ENCODE measurements at regions of chrX and their contacts with region 1.

Region 1: GRCh38 chrX:24054182-24055042 is at the start of gene EIF2S3:
- DNase-seq: peak; percentile 76 to 91
- ATAC-seq: peak; percentile 82 to 94 (median 82)
- H3K4me3 ChIP-seq: peak within 1 kb of the TSS; percentile 62
- H3K4me3 Mint-ChIP-seq: no peak within 1 kb of the TSS
- H3K27ac ChIP-seq: peak within 1 kb of the TSS; percentile 93
- H3K27ac Mint-ChIP-seq: no peak within 1 kb of the TSS
- H3K4me1 ChIP-seq: peaks cover 6% of the 10 kb centered on the region
- H3K4me1 Mint-ChIP-seq: no peaks in the 10 kb centered on the region
- H3K27me3 ChIP-seq: no peaks in the 10 kb centered on the region
- H3K27me3 Mint-ChIP-seq: no peaks in the 10 kb centered on the region
- CTCF ChIP-seq: peak; percentile 48
- total RNA-seq, gene EIF2S3: 124 to 199 (median 132) TPM

Region 2: DNA sequence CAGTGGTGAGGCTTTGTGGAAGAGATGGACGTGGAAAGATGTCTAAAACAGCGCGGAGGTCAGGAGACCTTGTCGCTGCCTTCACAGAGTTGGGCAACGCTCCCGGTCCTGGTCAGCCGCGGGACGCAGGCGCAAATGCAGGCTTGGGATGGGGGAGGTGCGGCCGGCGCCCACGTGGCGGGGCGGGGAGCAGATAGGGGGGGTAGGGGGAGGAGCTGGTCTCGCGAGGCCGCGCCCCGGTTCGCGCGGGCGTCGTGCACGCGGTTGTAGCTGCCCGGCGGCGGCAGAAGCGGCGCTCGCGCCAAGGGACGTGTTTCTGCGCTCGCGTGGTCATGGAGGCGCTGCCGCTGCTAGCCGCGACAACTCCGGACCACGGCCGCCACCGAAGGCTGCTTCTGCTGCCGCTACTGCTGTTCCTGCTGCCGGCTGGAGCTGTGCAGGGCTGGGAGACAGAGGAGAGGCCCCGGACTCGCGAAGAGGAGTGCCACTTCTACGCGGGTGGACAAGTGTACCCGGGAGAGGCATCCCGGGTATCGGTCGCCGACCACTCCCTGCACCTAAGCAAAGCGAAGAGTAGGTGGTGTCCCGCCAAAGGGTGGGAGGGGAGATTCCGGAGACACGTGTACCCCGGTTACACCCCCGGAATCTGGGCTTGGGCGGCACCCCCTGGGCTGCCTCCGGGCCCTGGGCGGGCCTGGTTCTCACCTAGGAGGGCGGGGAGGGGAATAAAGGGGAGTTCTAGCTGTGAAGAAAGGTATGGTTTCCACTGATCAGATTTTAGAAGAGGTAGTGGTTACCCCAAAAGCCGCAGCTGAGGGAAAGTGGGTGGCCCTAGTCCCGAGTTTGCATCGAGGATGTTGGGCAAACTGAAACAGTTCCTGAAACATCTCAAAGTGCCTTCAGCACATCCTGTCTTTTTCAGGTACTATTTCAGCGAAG is 386.9 kb before region 1 on chrX and contains the start of gene PRDX4:
- intact Hi-C with region 1: loop called (anchors 10 kb)
- DNase-seq: peak; percentile 58 to 81
- ATAC-seq: peak; percentile 92 to 98 (median 94)
- H3K4me3 ChIP-seq: peak within 1 kb of the TSS; percentile 78
- H3K4me3 Mint-ChIP-seq: peak within 1 kb of the TSS; percentile 86
- H3K27ac ChIP-seq: peak within 1 kb of the TSS; percentile 80
- H3K27ac Mint-ChIP-seq: peak within 1 kb of the TSS; percentile 77 to 85
- H3K4me1 ChIP-seq: peaks cover 6% of the 10 kb centered on the region
- H3K4me1 Mint-ChIP-seq: peaks cover 3 to 11% of the 10 kb centered on the region in 2 donors
- H3K27me3 ChIP-seq: no peaks in the 10 kb centered on the region
- H3K27me3 Mint-ChIP-seq: no peaks in the 10 kb centered on the region
- CTCF ChIP-seq: no peak
- total RNA-seq, gene PRDX4: 6.8 to 13.5 (median 7.8) TPM

Region 3: DNA sequence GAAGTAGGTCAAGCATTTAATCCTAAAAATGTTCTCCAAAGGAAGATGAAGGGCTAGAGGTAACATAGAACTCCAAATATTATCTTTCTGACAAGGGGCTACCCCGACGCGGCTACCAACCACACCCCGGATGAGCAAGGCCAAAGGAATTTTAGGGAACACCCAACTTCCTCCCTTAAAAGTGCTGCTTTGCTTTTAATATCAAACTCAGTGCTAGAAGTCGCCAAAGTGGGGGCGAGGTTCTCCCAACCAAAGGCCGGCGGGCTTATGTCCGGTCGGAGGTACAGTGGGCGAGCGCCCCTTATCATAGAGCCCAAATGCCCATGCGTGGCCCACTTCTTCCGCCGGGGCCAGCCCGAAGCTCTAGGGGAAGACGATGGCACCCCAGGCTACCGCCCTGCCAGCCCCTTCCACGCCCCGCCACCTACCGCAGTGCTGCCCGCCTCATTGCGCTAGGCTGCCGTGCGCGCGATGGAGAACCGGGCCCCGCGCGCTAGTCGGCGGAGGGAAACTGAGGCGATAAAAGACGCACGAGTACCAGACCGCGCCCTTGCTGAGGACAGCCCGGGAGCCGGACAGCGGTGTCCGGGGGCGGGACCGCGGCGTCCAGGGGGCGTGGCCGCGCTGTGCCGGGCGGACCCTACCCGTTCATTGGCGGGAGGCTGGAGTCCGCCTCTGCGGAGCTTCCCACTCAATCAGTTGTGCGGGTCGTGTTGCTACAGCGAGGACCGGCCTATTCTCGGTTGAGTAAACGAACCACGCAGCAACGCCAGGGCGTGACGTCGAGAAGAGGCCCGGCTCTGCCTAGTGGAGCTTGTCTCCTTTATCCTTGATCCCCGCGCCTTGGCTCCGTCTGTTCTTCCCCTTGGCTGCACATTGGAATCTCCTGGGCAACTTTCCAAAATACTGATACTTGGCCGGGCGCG is 311.5 kb before region 1 on chrX and contains the start of gene ACOT9:
- intact Hi-C with region 1: loop called (anchors 1 kb)
- DNase-seq: peak; percentile 69 to 76
- ATAC-seq: peak; percentile 95 to 99 (median 95)
- H3K4me3 ChIP-seq: peak within 1 kb of the TSS; percentile 69
- H3K4me3 Mint-ChIP-seq: peak within 1 kb of the TSS; percentile 81
- H3K27ac ChIP-seq: peak within 1 kb of the TSS; percentile 77
- H3K27ac Mint-ChIP-seq: peak within 1 kb of the TSS; percentile 54 to 87
- H3K4me1 ChIP-seq: peaks cover 27% of the 10 kb centered on the region
- H3K4me1 Mint-ChIP-seq: peaks cover 14 to 16% of the 10 kb centered on the region in 2 donors
- H3K27me3 ChIP-seq: no peaks in the 10 kb centered on the region
- H3K27me3 Mint-ChIP-seq: no peaks in the 10 kb centered on the region
- CTCF ChIP-seq: no peak
- total RNA-seq, gene ACOT9: 20.0 to 24.9 (median 21.4) TPM

Region 4: GRCh38 chrX:23861215-23861896 is 193.1 kb before region 1 on chrX:
- intact Hi-C with region 1: no loop called
- DNase-seq: no peak
- ATAC-seq: peak in 2 of 3 donors; percentile 36 to 43
- H3K4me3 ChIP-seq: no peak overlapping the region
- H3K4me3 Mint-ChIP-seq: no peak overlapping the region
- H3K27ac ChIP-seq: no peak overlapping the region
- H3K27ac Mint-ChIP-seq: peak overlapping the region in 1 of 2 donors; percentile 56
- H3K4me1 ChIP-seq: no peaks in the 10 kb centered on the region
- H3K4me1 Mint-ChIP-seq: peaks cover 0 to 5% of the 10 kb centered on the region in 2 donors
- H3K27me3 ChIP-seq: no peaks in the 10 kb centered on the region
- H3K27me3 Mint-ChIP-seq: no peaks in the 10 kb centered on the region
- CTCF ChIP-seq: no peak

Region 5: DNA sequence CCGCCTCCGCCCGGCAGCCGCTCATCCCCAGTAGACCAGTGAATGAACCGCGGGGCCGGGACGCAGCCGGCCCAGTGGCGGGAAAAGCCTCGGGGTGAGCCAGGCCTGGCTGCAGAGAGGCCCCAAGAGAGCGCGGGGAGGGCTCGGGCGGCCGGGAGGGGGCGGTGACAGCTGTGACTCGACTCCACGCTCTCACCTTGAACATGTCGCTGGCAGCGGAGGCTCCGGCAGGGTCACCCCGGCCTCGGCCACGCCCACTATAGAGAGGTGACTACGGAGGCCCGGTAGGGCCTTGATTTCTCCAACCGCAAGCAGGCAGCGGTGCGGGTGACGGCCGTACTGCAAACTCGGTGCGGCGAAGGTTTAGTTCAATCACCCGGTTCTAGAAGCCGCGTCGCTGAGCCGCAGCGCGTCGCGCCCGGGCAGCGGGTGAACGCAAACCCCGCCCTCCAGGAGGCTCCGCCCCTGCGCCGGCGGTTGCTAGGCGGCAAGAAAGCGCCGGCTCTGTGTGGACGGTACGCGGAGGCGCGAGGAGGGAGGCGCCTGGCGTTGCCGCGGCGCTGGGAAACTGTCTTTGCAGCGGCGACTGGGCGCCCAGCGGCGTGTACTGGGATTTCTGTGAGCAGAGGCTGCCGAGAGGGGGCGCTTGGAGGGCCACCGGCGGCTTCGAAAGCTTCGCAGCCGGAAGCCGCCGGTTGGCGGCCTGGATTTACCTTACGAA is 146.8 kb before region 1 on chrX and contains the starts of genes APOO and CXorf58:
- intact Hi-C with region 1: loop called (anchors 1 kb)
- DNase-seq: peak; percentile 85 to 95
- ATAC-seq: peak; percentile 90 to 97 (median 90)
- H3K4me3 ChIP-seq: peak within 1 kb of the TSS; percentile 56
- H3K4me3 Mint-ChIP-seq: peak within 1 kb of the TSS; percentile 84
- H3K27ac ChIP-seq: peak within 1 kb of the TSS; percentile 94
- H3K27ac Mint-ChIP-seq: peak within 1 kb of the TSS; percentile 84 to 88
- H3K4me1 ChIP-seq: peaks cover 10% of the 10 kb centered on the region
- H3K4me1 Mint-ChIP-seq: peaks cover 6 to 7% of the 10 kb centered on the region in 2 donors
- H3K27me3 ChIP-seq: no peaks in the 10 kb centered on the region
- H3K27me3 Mint-ChIP-seq: no peaks in the 10 kb centered on the region
- CTCF ChIP-seq: peak; percentile 69
- total RNA-seq, gene APOO: 8.8 to 13.0 (median 10.0) TPM
- total RNA-seq, gene CXorf58: not detected

Region 6: DNA sequence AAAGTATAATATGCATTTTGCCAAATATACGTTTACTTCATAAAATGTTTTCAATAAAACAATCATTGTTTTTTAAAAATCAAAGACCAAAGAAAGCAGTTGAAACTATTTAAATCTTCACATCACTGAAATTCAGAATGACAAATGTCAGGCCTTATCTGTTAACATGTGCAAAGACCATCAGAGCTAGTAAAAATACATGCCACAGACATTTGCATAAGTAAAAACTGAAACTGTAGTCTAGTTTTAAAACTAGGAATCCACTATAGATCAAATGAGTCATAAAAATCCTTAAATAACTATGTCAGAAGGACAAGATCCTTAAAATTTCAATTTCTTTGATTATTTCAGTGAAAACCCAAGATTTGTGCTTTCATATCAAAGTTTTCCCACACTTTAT is 52.2 kb before region 1 on chrX:
- intact Hi-C with region 1: no loop called
- DNase-seq: no peak
- ATAC-seq: no peak
- H3K4me3 ChIP-seq: no peak overlapping the region
- H3K4me3 Mint-ChIP-seq: no peak overlapping the region
- H3K27ac ChIP-seq: no peak overlapping the region
- H3K27ac Mint-ChIP-seq: no peak overlapping the region
- H3K4me1 ChIP-seq: no peaks in the 10 kb centered on the region
- H3K4me1 Mint-ChIP-seq: peaks cover 0 to 5% of the 10 kb centered on the region in 2 donors
- H3K27me3 ChIP-seq: no peaks in the 10 kb centered on the region
- H3K27me3 Mint-ChIP-seq: no peaks in the 10 kb centered on the region
- CTCF ChIP-seq: no peak

Region 7: GRCh38 chrX:24024819-24025740 is 29.3 kb before region 1 on chrX:
- intact Hi-C with region 1: loop called (anchors 2 kb)
- DNase-seq: peak; percentile 76 to 88
- ATAC-seq: peak; percentile 91 to 97 (median 91)
- H3K4me3 ChIP-seq: peak overlapping the region; percentile 88
- H3K4me3 Mint-ChIP-seq: peak overlapping the region; percentile 93
- H3K27ac ChIP-seq: peak overlapping the region; percentile 94
- H3K27ac Mint-ChIP-seq: peak overlapping the region; percentile 83 to 87
- H3K4me1 ChIP-seq: peaks cover 2% of the 10 kb centered on the region
- H3K4me1 Mint-ChIP-seq: peaks cover 21 to 27% of the 10 kb centered on the region in 2 donors
- H3K27me3 ChIP-seq: no peaks in the 10 kb centered on the region
- H3K27me3 Mint-ChIP-seq: no peaks in the 10 kb centered on the region
- CTCF ChIP-seq: no peak

Region 8: DNA sequence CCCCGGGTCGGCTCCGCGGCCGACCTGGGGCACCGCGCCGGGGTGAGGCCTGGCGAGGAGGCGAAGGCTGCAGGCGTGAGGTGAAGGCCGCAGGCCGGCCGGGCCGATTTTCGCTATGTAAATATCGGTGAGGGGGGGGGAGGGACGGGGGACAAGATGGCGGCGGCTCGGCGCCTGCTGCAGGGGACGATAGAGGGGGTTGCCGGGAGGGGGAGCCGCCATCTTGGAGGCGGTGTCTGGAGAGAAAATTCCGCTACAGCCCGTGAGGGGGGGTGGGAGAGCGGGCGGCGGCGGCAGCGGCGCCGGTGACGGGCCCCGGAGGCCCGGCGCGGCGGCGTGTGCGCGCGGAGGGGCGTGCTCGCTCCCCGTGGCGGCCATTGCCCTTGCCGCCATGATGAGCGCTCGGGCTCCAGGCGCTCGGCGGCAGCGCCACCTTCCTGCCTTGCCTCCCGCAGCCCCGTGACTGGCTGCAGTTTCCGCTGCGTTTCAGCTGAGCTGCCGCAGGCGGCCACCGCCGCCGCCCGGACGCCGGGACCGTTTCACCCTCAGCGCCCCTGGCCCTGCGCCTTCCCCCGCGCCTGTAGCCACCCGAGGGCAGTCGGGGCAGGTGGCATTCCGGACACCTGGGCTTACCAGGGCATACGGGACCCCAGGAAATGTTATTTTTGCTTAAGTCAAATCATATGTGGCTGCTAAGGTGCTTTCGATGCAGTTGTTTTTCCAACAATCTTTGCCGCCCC is 95.8 kb after region 1 on chrX:
- intact Hi-C with region 1: loop called (anchors 2 kb)
- DNase-seq: peak; percentile 71 to 91
- ATAC-seq: peak; percentile 73 to 89 (median 78)
- H3K4me3 ChIP-seq: peak overlapping the region; percentile 68
- H3K4me3 Mint-ChIP-seq: peak overlapping the region; percentile 96
- H3K27ac ChIP-seq: peak overlapping the region; percentile 94
- H3K27ac Mint-ChIP-seq: peak overlapping the region; percentile 83 to 93
- H3K4me1 ChIP-seq: peaks cover 24% of the 10 kb centered on the region
- H3K4me1 Mint-ChIP-seq: peaks cover 33 to 58% of the 10 kb centered on the region in 2 donors
- H3K27me3 ChIP-seq: no peaks in the 10 kb centered on the region
- H3K27me3 Mint-ChIP-seq: no peaks in the 10 kb centered on the region
- CTCF ChIP-seq: peak; percentile 16

Region 9: GRCh38 chrX:24169211-24169610 is 114.8 kb after region 1 on chrX:
- intact Hi-C with region 1: no loop called
- DNase-seq: no peak
- ATAC-seq: peak in 1 of 3 donors; percentile 26
- H3K4me3 ChIP-seq: no peak overlapping the region
- H3K4me3 Mint-ChIP-seq: peak overlapping the region; percentile 21
- H3K27ac ChIP-seq: no peak overlapping the region
- H3K27ac Mint-ChIP-seq: peak overlapping the region; percentile 49 to 70
- H3K4me1 ChIP-seq: peaks cover 6% of the 10 kb centered on the region
- H3K4me1 Mint-ChIP-seq: peaks cover 61 to 69% of the 10 kb centered on the region in 2 donors
- H3K27me3 ChIP-seq: no peaks in the 10 kb centered on the region
- H3K27me3 Mint-ChIP-seq: no peaks in the 10 kb centered on the region
- CTCF ChIP-seq: no peak

Region 10: DNA sequence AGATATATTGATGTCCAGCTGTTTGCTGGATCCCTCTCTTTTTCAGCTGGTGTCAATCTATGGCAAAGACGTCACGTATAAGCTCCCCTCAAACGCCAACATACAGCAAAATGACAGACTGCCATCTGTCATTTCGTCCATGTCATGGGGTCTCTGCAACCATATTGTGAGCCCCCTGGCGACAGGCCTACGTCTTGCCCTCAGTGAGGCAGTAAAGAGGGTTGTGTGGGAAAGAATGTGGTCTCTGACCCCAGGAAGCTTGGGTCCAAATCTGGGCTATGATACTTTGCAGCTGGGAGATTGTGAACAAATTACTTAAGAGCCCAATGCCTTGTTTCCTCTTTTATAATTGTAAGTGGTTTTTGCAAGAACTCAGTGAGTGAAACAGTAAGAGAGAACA is 252.0 kb after region 1 on chrX:
- intact Hi-C with region 1: no loop called
- DNase-seq: no peak
- ATAC-seq: no peak
- H3K4me3 ChIP-seq: no peak overlapping the region
- H3K4me3 Mint-ChIP-seq: no peak overlapping the region
- H3K27ac ChIP-seq: no peak overlapping the region
- H3K27ac Mint-ChIP-seq: no peak overlapping the region
- H3K4me1 ChIP-seq: no peaks in the 10 kb centered on the region
- H3K4me1 Mint-ChIP-seq: no peaks in the 10 kb centered on the region
- H3K27me3 ChIP-seq: no peaks in the 10 kb centered on the region
- H3K27me3 Mint-ChIP-seq: peaks cover 0 to 39% of the 10 kb centered on the region in 2 donors
- CTCF ChIP-seq: no peak